Activated T-helper 1 cell treated with anti-CD3 and anti-CD28 coated beads, Interleukin-12 subunit alpha, Interleukin-12 subunit beta, Interleukin-2, Interleukin-4 antibody, amounts not matched to agents 30 ng/mL and 10 ng/mL and 1 ng/mL, durations not matched to agents 14 hours and 24 hours and 36 hours (primary cell): ENCODE measurements at regions of chr3 and their contacts with region 1.

Region 1: GRCh38 chr3:48268381-48269183 is 27.7 kb downstream of the ZNF589 start:
- DNase-seq: peak; percentile 74
- H3K4me3 Mint-ChIP-seq: peak overlapping the region; percentile 63
- H3K27ac Mint-ChIP-seq: peak overlapping the region; percentile 97
- H3K4me1 Mint-ChIP-seq: peaks cover 51% of the 10 kb centered on the region
- H3K27me3 Mint-ChIP-seq: no peaks in the 10 kb centered on the region

Region 2: DNA sequence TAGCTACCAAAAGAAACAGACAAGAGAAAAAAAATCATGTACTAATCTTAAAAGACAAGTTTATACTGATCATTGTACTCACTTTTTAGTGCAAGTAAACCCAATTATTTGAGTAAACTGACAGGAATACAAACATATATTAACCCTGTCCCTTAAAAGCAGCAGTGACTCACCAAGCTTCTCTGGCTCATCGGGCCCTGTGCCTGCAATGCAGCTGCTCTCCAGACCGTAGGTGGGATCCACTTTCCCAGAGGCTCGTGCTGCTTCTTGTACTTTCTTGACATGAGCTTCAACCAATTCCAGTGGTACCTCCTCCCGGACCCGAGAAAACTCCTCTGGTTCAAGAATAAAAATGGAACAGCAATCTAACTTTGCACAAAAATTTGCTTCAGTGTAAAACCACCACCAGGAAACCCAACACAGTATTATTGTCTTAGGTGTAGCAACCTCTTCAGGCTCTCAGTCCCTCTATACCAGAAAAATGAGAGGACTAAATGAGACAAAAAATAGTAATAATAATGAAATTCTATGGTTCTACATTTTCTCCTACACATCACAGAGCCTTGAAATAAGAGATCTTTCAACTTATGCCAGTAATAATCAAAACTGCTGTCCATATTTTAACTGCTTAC is 607.3 kb before region 1 on chr3:
- intact Hi-C with region 1: no loop called
- DNase-seq: no peak
- H3K4me3 Mint-ChIP-seq: no peak overlapping the region
- H3K27ac Mint-ChIP-seq: no peak overlapping the region
- H3K4me1 Mint-ChIP-seq: peaks cover 2% of the 10 kb centered on the region
- H3K27me3 Mint-ChIP-seq: no peaks in the 10 kb centered on the region

Region 3: GRCh38 chr3:48088749-48089466 is 179.7 kb before region 1 on chr3:
- intact Hi-C with region 1: loop called (anchors 10 kb)
- DNase-seq: peak; percentile 94
- H3K4me3 Mint-ChIP-seq: peak overlapping the region; percentile 97
- H3K27ac Mint-ChIP-seq: peak overlapping the region; percentile 99
- H3K4me1 Mint-ChIP-seq: peaks cover 35% of the 10 kb centered on the region
- H3K27me3 Mint-ChIP-seq: peaks cover 7% of the 10 kb centered on the region

Region 4: GRCh38 chr3:48112813-48113212 is 155.8 kb before region 1 on chr3:
- intact Hi-C with region 1: loop called (anchors 1 kb)
- DNase-seq: no peak
- H3K4me3 Mint-ChIP-seq: peak overlapping the region; percentile 38
- H3K27ac Mint-ChIP-seq: peak overlapping the region; percentile 76
- H3K4me1 Mint-ChIP-seq: peaks cover 17% of the 10 kb centered on the region
- H3K27me3 Mint-ChIP-seq: peaks cover 2% of the 10 kb centered on the region

Region 5: GRCh38 chr3:48232734-48233133 is 35.8 kb before region 1 on chr3:
- intact Hi-C with region 1: loop called (anchors 1 kb)
- DNase-seq: peak; percentile 26
- H3K4me3 Mint-ChIP-seq: no peak overlapping the region
- H3K27ac Mint-ChIP-seq: no peak overlapping the region
- H3K4me1 Mint-ChIP-seq: peaks cover 10% of the 10 kb centered on the region
- H3K27me3 Mint-ChIP-seq: no peaks in the 10 kb centered on the region

Region 6: GRCh38 chr3:48240711-48241491 is 27.7 kb before region 1 on chr3 and contains the start of gene ZNF589:
- intact Hi-C with region 1: loop called (anchors 1 kb)
- DNase-seq: peak; percentile 93
- H3K4me3 Mint-ChIP-seq: peak within 1 kb of the TSS; percentile 91
- H3K27ac Mint-ChIP-seq: peak within 1 kb of the TSS; percentile 95
- H3K4me1 Mint-ChIP-seq: peaks cover 19% of the 10 kb centered on the region
- H3K27me3 Mint-ChIP-seq: no peaks in the 10 kb centered on the region
- total RNA-seq, gene ZNF589: 33.0 and 34.2 TPM in 2 replicates

Region 7: DNA sequence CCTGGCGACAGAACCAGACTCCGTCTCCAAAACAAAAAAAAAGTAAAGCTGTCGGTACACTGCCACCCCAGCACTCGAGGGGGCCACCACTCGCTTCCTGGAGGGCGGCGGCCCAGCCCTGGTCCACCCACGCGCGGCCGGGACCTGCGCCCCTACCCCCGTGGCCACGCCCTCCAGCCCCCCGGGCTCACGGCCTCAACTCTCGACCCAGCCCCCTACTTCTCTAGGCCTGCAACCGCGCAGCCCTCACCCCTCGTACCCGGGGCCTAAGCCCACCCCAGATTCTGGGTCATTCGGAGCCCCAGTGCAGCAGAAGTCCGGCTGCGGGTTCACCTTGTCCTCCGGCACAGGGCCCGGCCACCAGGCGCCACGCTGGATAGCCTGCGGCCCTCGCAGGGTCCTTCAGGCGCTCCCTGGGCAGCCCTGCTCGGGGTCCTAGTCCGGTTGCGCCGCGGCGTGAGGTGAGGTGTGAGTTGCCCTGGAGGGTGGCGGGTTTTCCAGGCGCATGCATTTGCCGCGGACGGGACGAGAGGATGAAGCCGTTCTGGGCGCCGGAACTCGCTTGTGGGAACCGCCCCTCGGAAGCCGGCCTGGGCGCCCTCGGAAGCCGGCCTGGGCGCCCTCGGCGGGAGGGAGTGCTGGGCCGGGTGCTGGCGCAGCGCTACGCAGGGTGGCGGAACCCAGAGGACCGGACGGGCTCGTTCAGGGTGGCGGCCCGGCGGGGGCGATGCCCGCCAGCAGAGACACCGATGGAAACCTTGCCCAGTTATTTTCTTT is 32.6 kb after region 1 on chr3:
- intact Hi-C with region 1: loop called (anchors 1 kb)
- DNase-seq: peak; percentile 87
- H3K4me3 Mint-ChIP-seq: peak within 1 kb of the TSS; percentile 95
- H3K27ac Mint-ChIP-seq: peak within 1 kb of the TSS; percentile 98
- H3K4me1 Mint-ChIP-seq: peaks cover 52% of the 10 kb centered on the region
- H3K27me3 Mint-ChIP-seq: peaks cover 11% of the 10 kb centered on the region

Region 8: DNA sequence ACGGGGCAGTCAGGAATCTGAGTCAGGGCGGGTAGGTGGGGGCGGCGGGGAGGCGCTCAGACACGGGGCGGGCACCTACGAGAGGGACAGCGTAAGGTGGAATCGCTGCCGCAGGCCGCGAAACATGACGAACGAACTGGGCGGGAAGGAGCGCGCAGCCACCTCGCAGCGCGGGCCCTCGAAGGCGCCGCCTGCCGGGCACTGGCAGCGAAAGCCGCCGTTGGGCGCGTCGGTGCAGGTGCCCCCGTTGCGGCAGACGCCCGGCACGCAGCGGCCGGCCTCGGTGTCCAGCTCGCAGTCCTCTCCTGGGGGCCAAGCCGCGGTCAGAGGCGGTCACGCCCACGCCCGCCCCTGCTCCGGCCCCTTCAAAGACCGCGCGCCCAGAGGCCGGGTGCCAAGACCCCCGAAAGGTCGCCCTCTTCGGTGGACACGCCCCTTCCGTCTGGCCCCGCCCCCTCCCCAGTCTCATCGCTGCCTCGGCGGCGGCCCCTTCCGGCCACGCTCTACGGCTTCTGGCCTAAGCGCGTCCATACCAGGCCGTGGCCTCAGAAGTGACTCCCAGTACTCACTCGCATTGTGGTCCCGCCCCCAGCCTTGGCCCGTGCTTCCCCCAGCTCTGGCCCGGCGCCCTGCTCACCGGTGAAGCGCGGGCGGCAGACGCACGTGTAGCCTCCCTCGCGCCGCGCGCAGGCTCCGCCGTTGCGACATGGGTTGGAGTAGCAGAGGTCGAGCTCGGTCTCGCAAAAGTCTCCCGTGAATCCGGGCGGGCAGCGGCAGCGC is 387.7 kb after region 1 on chr3:
- intact Hi-C with region 1: loop called (anchors 1 kb)
- DNase-seq: peak; percentile 80
- H3K4me3 Mint-ChIP-seq: peak overlapping the region; percentile 79
- H3K27ac Mint-ChIP-seq: peak overlapping the region; percentile 89
- H3K4me1 Mint-ChIP-seq: peaks cover 7% of the 10 kb centered on the region
- H3K27me3 Mint-ChIP-seq: peaks cover 4% of the 10 kb centered on the region